ENCODE measurements at regions of chr6 and their contacts with region 1.

Region 1: DNA sequence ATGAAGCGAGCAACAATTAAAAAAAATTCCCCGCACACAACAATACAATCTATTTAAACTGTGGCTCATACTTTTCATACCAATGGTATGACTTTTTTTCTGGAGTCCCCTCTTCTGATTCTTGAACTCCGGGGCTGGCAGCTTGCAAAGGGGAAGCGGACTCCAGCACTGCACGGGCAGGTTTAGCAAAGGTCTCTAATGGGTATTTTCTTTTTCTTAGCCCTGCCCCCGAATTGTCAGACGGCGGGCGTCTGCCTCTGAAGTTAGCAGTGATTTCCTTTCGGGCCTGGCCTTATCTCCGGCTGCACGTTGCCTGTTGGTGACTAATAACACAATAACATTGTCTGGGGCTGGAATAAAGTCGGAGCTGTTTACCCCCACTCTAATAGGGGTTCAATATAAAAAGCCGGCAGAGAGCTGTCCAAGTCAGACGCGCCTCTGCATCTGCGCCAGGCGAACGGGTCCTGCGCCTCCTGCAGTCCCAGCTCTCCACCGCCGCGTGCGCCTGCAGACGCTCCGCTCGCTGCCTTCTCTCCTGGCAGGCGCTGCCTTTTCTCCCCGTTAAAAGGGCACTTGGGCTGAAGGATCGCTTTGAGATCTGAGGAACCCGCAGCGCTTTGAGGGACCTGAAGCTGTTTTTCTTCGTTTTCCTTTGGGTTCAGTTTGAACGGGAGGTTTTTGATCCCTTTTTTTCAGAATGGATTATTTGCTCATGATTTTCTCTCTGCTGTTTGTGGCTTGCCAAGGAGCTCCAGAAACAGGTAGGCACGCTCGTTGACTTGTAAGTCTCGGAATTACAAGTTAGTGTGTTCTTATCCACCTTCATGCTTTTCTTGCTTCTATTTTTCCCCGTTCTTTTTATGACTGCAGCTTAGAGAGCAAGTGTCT is at the start of gene EDN1:
- DNase-seq: peak; percentile 82
- ATAC-seq: peak; percentile 94
- H3K4me3 Mint-ChIP-seq: peak within 1 kb of the TSS; percentile 74
- H3K27ac Mint-ChIP-seq: no peak within 1 kb of the TSS
- H3K4me1 Mint-ChIP-seq: peaks cover 15% of the 10 kb centered on the region
- H3K27me3 Mint-ChIP-seq: peaks cover 36% of the 10 kb centered on the region
- total RNA-seq, gene EDN1: not detected

Region 2: GRCh38 chr6:12150812-12151432 is 139.3 kb before region 1 on chr6:
- CTCF ChIA-PET with region 1: interaction called, 3 read pairs
- POLR2A ChIA-PET with region 1: no interaction called
- intact Hi-C with region 1: loop called (anchors 1 to 5 kb)
- DNase-seq: peak; percentile 60
- ATAC-seq: no peak
- H3K4me3 Mint-ChIP-seq: no peak overlapping the region
- H3K27ac Mint-ChIP-seq: no peak overlapping the region
- H3K4me1 Mint-ChIP-seq: peaks cover 14% of the 10 kb centered on the region
- H3K27me3 Mint-ChIP-seq: no peaks in the 10 kb centered on the region

Region 3: GRCh38 chr6:12241493-12242175 is 48.5 kb before region 1 on chr6:
- CTCF ChIA-PET with region 1: interaction called, 14 read pairs
- POLR2A ChIA-PET with region 1: no interaction called
- intact Hi-C with region 1: no loop called
- DNase-seq: no peak
- ATAC-seq: peak; percentile 91
- H3K4me3 Mint-ChIP-seq: no peak overlapping the region
- H3K27ac Mint-ChIP-seq: peak overlapping the region; percentile 61
- H3K4me1 Mint-ChIP-seq: peaks cover 24% of the 10 kb centered on the region
- H3K27me3 Mint-ChIP-seq: peaks cover 4% of the 10 kb centered on the region

Region 4: GRCh38 chr6:12311106-12311505 is 20.9 kb after region 1 on chr6:
- CTCF ChIA-PET with region 1: interaction called, 12 read pairs
- POLR2A ChIA-PET with region 1: no interaction called
- intact Hi-C with region 1: no loop called
- DNase-seq: no peak
- ATAC-seq: no peak
- H3K4me3 Mint-ChIP-seq: no peak overlapping the region
- H3K27ac Mint-ChIP-seq: no peak overlapping the region
- H3K4me1 Mint-ChIP-seq: no peaks in the 10 kb centered on the region
- H3K27me3 Mint-ChIP-seq: peaks cover 4% of the 10 kb centered on the region

Region 5: DNA sequence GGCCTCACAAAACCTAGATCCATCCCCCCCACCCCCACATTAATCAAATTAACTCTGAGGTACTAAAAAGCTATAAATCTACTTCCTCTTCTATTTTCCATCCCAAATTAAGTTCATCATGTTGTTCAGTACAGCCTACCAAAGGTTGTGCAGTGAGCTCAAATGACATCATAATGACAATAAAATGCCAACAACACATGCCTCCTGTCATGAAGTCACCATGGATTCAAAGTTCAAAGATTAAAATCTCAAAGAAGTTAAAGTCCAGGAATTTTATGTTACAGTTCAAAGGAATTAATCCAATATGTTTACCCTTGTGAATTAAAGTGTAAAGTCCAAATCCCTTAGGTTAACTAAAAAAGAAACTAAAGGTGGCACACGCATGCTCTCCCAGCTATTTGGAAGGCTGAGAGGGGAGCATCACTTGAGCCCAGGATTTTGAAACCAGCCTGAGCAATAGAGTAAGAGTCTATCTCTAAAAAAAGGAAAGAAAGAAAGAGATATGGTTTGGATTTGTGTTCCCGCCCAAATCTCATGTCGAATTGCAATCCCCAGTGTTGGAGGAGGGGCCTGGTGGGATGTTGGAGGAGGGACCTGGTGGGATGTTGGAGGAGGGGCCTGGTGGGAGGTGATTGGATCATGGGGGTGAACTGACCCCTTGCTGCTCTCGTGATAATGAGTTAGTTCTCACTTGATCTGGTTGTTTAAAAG is 1258.5 kb after region 1 on chr6:
- CTCF ChIA-PET with region 1: no interaction called
- POLR2A ChIA-PET with region 1: no interaction called
- intact Hi-C with region 1: no loop called
- DNase-seq: no peak
- ATAC-seq: no peak
- H3K4me3 Mint-ChIP-seq: no peak overlapping the region
- H3K27ac Mint-ChIP-seq: no peak overlapping the region
- H3K4me1 Mint-ChIP-seq: no peaks in the 10 kb centered on the region
- H3K27me3 Mint-ChIP-seq: no peaks in the 10 kb centered on the region